HepG2 (cell line): ENCODE measurements at regions of chr20 and their contacts with region 1.

Region 1: DNA sequence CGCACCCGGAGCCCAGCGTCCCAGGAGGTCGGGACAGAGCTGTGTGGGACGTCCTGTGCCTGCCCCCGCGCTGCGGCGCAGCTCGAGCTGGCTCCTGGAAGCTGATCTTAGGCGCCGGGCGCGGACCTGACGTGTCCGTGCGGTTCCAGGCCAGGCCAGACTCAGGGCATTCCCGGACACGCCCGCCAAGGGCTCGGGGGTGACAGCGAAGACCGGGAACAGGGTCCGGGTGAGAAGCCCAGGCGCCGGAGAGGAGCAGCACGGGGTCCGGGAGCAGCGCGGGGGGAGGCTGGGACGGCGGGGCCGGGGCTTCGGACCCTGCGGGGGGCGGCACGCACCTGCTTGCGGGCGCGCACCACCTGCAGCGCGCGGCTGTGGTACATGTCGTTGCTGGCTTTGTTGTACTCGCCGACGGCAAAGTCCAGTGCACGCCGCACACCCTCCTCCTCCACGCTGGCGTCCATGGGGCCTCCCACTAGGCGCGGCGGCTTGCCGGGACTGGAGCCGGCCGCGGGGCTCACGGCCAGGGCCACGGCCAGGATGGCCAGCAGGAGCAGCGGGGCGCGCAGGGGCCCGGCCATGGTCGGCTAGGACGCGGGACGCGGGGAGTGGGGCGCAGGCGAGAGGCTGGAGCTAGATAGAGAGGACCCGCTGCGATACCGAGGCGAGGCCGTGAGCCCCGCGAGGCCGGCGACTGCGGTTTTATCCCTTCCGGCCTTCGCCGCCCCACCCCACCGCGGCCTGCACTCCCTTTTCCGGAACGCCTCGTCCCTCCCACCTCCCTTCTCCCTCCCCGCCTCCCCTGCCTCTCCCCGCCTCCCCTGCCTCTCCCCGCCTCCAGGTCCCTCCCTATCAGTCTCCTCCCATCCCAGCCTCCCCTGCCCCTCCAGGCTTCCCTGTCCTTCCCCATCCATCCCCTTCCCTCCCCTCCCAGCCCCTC is at the start of gene CST3:
- DNase-seq: peak; percentile 87
- ATAC-seq: peak; percentile 70
- H3K4me3 ChIP-seq: peak within 1 kb of the TSS; percentile 80 to 93 (median 88)
- H3K27ac ChIP-seq: peak within 1 kb of the TSS; percentile 91
- H3K4me1 ChIP-seq: peaks cover 89% of the 10 kb centered on the region
- H3K27me3 ChIP-seq: no peaks in the 10 kb centered on the region; a peak in 1 of 5 replicates
- CTCF ChIP-seq: no peak; the same call in 1 of the 2 replicates
- EP300 ChIP-seq: peak in 1 of 2 experiments; percentile 32; a peak in 3 of 4 replicates
- POLR2A ChIP-seq: peak; percentile 99 to 100
- RAD21 ChIP-seq: peak; percentile 81
- total RNA-seq, gene CST3: 300 and 690 TPM in 2 replicates

Region 2: GRCh38 chr20:22575087-22575721 is 1062.3 kb before region 1 on chr20:
- CTCF ChIA-PET with region 1: no interaction called
- POLR2A ChIA-PET with region 1: no interaction called
- in situ Hi-C with region 1: loop called (anchors 10 kb)
- intact Hi-C with region 1: no loop called
- DNase-seq: peak; percentile 23
- ATAC-seq: no peak
- H3K4me3 ChIP-seq: peak overlapping the region in 2 of 3 experiments; percentile 32 to 95; a peak in 2 of 6 replicates
- H3K27ac ChIP-seq: peak overlapping the region; percentile 86
- H3K4me1 ChIP-seq: peaks cover 85% of the 10 kb centered on the region
- H3K27me3 ChIP-seq: no peaks in the 10 kb centered on the region; a peak in 1 of 5 replicates
- CTCF ChIP-seq: no peak
- EP300 ChIP-seq: no peak
- POLR2A ChIP-seq: no peak
- RAD21 ChIP-seq: no peak

Region 3: GRCh38 chr20:23435626-23436539 is 201.7 kb before region 1 on chr20:
- CTCF ChIA-PET with region 1: no interaction called
- POLR2A ChIA-PET with region 1: interaction called, 11 read pairs
- in situ Hi-C with region 1: no loop called
- intact Hi-C with region 1: no loop called
- DNase-seq: peak; percentile 86
- ATAC-seq: peak; percentile 93
- H3K4me3 ChIP-seq: peak overlapping the region; percentile 38 to 67 (median 47)
- H3K27ac ChIP-seq: peak overlapping the region; percentile 50
- H3K4me1 ChIP-seq: peaks cover 41% of the 10 kb centered on the region
- H3K27me3 ChIP-seq: no peaks in the 10 kb centered on the region; a peak in 1 of 5 replicates
- CTCF ChIP-seq: no peak; the same call in 1 of the 2 replicates
- EP300 ChIP-seq: no peak
- POLR2A ChIP-seq: 0 out of 4 replicates have a peak, but pooled peaks of 1 of the 2 experiments have one; percentile 43
- RAD21 ChIP-seq: no peak

Region 4: DNA sequence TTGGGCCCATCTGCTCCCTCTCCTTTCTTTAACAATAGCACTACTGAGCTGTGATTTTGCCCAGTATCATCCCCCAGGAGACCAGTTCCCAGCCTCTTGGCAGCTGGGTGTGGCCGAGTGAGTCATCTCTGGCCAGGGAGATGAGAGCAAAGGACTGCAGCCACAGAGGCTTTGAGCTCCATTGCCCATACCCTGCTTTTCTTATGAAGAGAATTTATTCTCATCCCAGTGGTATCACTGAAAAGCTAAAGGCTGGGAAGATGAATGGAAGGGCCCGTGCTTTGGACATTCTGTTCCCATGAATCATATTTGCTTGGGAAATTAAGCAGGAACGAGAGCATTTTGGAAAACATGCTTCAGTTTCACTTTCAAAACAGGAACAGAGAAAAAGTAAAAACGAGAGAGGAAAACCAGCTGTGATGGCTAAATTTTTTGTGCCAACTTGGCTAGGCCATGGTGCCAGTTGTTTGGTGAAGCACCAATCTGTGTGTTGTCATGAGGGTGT is 14.7 kb before region 1 on chr20:
- CTCF ChIA-PET with region 1: no interaction called
- POLR2A ChIA-PET with region 1: interaction called, 134 read pairs
- in situ Hi-C with region 1: no loop called
- intact Hi-C with region 1: no loop called
- DNase-seq: peak; percentile 72
- ATAC-seq: peak; percentile 78
- H3K4me3 ChIP-seq: peak overlapping the region; percentile 42 to 49 (median 44)
- H3K27ac ChIP-seq: no peak overlapping the region
- H3K4me1 ChIP-seq: peaks cover 73% of the 10 kb centered on the region
- H3K27me3 ChIP-seq: no peaks in the 10 kb centered on the region
- CTCF ChIP-seq: no peak
- EP300 ChIP-seq: no peak
- POLR2A ChIP-seq: no peak
- RAD21 ChIP-seq: no peak

Region 5: DNA sequence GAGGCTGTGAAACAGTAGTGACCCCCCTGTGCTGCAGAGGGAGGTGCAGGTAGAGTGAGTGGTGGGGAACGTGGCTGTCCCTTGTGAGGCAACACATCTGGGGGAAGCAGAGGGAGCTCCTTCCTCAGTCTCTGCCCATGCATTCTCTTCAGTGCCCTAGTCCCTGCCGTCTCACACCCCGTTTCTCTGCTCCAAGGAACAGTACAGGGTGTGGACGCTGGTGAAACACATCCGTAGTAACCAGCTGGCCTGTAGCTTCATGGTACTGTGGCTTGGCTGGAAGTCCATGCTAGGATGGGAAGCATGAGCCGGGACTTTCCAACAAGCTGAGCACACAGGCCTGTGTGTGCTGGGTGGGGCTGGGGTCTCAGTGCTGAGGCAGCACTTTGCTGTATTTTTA is 25.6 kb after region 1 on chr20:
- CTCF ChIA-PET with region 1: interaction called, 9 read pairs
- POLR2A ChIA-PET with region 1: interaction called, 543 read pairs
- in situ Hi-C with region 1: no loop called
- intact Hi-C with region 1: loop called (anchors 1 kb)
- DNase-seq: no peak
- ATAC-seq: no peak
- H3K4me3 ChIP-seq: no peak overlapping the region
- H3K27ac ChIP-seq: peak overlapping the region; percentile 93
- H3K4me1 ChIP-seq: peaks cover 69% of the 10 kb centered on the region
- H3K27me3 ChIP-seq: no peaks in the 10 kb centered on the region
- CTCF ChIP-seq: no peak
- EP300 ChIP-seq: no peak
- POLR2A ChIP-seq: no peak
- RAD21 ChIP-seq: no peak